ENCODE measurements at regions of chr18 and their contacts with region 1.

Region 1: GRCh38 chr18:40874233-40874632 is 1080.8 kb upstream of the PIK3C3 start:
- DNase-seq: no peak
- ATAC-seq: no peak
- H3K4me3 ChIP-seq: no peak overlapping the region
- H3K27ac ChIP-seq: no peak overlapping the region
- H3K4me1 ChIP-seq: no peaks in the 10 kb centered on the region
- H3K27me3 ChIP-seq: no peaks in the 10 kb centered on the region
- CTCF ChIP-seq: no peak

Region 2: DNA sequence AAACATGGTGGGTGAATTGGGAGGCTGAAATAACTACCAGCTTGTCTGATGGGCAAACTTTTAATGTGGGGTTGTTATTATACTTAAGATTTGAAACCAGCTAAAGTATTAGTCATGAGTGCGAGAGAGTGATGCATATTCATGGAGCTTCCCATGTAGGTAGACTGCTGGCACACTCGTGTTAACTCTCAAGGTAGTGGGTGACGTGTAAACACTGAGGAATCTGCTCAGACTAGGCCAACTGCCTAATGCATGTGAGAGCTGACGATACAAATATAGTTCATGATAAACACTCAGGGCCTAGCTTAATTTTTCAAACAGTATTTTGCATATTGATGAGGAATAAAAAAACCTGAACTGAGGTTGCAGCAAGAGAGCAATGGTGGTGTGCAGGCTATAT is 84.9 kb before region 1 on chr18:
- intact Hi-C with region 1: no loop called
- DNase-seq: no peak
- ATAC-seq: no peak
- H3K4me3 ChIP-seq: no peak overlapping the region
- H3K27ac ChIP-seq: no peak overlapping the region
- H3K4me1 ChIP-seq: no peaks in the 10 kb centered on the region
- H3K27me3 ChIP-seq: no peaks in the 10 kb centered on the region
- CTCF ChIP-seq: no peak

Region 3: GRCh38 chr18:40855661-40856060 is 18.6 kb before region 1 on chr18:
- intact Hi-C with region 1: loop called in 1 of 10 experiments (anchors 1 kb)
- DNase-seq: no peak
- ATAC-seq: no peak
- H3K4me3 ChIP-seq: no peak overlapping the region
- H3K27ac ChIP-seq: no peak overlapping the region
- H3K4me1 ChIP-seq: no peaks in the 10 kb centered on the region
- H3K27me3 ChIP-seq: no peaks in the 10 kb centered on the region
- CTCF ChIP-seq: no peak

Measured in heart right ventricle (tissue), 16 donors.